HepG2 (cell line): ENCODE measurements at regions of chr3 and their contacts with region 1.

Region 1: DNA sequence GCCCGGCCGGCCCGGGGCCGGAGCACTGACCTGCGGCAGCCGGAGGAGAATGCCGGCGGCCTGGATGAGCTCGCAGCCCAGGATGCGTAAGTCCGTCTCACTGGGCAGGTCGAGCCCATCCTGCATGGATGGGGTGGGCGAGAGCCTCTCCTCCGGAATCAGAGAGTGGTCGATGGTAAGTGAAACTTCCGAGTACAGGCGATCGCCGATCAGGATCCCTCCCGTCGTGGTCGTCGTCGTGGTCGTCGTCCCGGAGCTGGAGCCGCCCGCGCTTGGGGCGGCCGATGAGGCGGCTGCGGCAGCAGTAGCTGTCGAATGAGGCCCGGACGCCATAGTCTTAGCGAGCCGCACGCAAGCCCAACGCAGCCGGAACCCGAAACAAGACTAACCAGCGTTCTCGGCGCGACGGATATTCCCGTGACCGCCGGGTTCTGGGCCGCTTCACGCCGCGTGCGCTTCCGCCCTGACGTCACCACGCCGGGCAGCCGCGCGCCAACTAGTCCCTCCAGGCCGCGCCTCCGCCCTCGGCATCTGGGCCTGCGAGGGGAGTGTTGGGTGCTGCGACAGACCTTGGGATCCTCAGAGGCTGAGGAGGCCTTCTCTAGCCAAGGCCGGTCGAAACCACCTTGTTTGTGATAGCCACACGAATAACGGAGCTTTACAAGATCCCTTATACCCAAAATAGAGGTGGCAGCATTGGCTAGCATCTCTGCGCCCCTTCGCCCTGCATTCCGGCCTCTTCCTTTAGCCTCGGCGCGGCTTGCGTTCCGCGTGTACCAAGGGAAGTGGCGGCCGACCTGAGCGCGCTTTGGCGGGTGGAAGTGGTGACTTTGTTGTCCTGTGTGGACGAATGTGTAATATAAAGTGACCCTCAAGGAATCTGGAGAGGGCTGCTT is at the start of gene CCNL1:
- DNase-seq: peak; percentile 88
- ATAC-seq: peak; percentile 87
- H3K4me3 ChIP-seq: peak within 1 kb of the TSS; percentile 94 to 99 (median 98)
- H3K27ac ChIP-seq: peak within 1 kb of the TSS; percentile 100
- H3K4me1 ChIP-seq: peaks cover 64% of the 10 kb centered on the region
- H3K27me3 ChIP-seq: no peaks in the 10 kb centered on the region
- CTCF ChIP-seq: 0 out of 2 replicates have a peak, but pooled peaks have one; percentile 15
- EP300 ChIP-seq: peak; percentile 58 to 70; a peak in 3 of 4 replicates
- POLR2A ChIP-seq: peak; percentile 97 to 99
- RAD21 ChIP-seq: peak; percentile 64
- total RNA-seq, gene CCNL1: 23.5 and 151 TPM in 2 replicates

Region 2: GRCh38 chr3:156554842-156555687 is 604.9 kb before region 1 on chr3 and contains the start of gene SSR3:
- CTCF ChIA-PET with region 1: no interaction called
- POLR2A ChIA-PET with region 1: interaction called, 12 read pairs
- in situ Hi-C with region 1: no loop called
- intact Hi-C with region 1: no loop called
- DNase-seq: peak; percentile 96
- ATAC-seq: peak; percentile 99
- H3K4me3 ChIP-seq: peak within 1 kb of the TSS; percentile 85 to 100 (median 91)
- H3K27ac ChIP-seq: peak within 1 kb of the TSS; percentile 94
- H3K4me1 ChIP-seq: peaks cover 38% of the 10 kb centered on the region
- H3K27me3 ChIP-seq: no peaks in the 10 kb centered on the region; a peak in 2 of 5 replicates
- CTCF ChIP-seq: no peak
- EP300 ChIP-seq: peak in 1 of 2 experiments; percentile 35; a peak in 2 of 4 replicates
- POLR2A ChIP-seq: peak; percentile 88 to 98
- RAD21 ChIP-seq: no peak; the same call in 1 of the 2 replicates
- total RNA-seq, gene SSR3: 268 and 325 TPM in 2 replicates

Region 3: DNA sequence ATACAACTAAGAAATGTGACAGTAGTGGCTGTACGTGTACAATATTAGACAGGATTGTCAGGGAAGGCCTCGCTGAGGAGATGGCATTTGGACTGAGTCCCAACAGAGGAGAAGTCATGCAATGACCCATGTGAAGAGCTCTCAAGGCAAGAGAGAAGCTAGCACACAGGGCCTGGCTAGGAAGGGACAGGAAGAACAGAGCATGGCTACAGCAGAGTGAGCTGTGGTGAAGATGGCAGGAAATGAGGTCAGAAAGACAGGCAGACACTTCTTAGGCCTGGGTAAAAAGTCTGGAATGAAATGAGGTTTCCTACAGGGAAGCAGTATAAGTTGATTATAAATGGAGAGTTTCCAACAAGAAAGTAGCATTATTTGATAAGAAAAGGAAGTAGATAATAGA is 367.1 kb before region 1 on chr3:
- CTCF ChIA-PET with region 1: no interaction called
- POLR2A ChIA-PET with region 1: no interaction called
- in situ Hi-C with region 1: no loop called
- intact Hi-C with region 1: no loop called
- DNase-seq: no peak
- ATAC-seq: no peak
- H3K4me3 ChIP-seq: no peak overlapping the region
- H3K27ac ChIP-seq: no peak overlapping the region
- H3K4me1 ChIP-seq: peaks cover 51% of the 10 kb centered on the region
- H3K27me3 ChIP-seq: no peaks in the 10 kb centered on the region; a peak in 1 of 5 replicates
- CTCF ChIP-seq: no peak
- EP300 ChIP-seq: no peak
- POLR2A ChIP-seq: no peak
- RAD21 ChIP-seq: no peak

Region 4: GRCh38 chr3:157122116-157122515 is 37.9 kb before region 1 on chr3:
- CTCF ChIA-PET with region 1: no interaction called
- POLR2A ChIA-PET with region 1: interaction called, 22 read pairs
- in situ Hi-C with region 1: no loop called
- intact Hi-C with region 1: no loop called
- DNase-seq: peak; percentile 43
- ATAC-seq: no peak
- H3K4me3 ChIP-seq: no peak overlapping the region
- H3K27ac ChIP-seq: peak overlapping the region; percentile 23
- H3K4me1 ChIP-seq: peaks cover 86% of the 10 kb centered on the region
- H3K27me3 ChIP-seq: no peaks in the 10 kb centered on the region
- CTCF ChIP-seq: no peak
- EP300 ChIP-seq: peak in 1 of 2 experiments; percentile 40; a peak in 1 of 4 replicates
- POLR2A ChIP-seq: no peak
- RAD21 ChIP-seq: no peak

Region 5: GRCh38 chr3:157174649-157175498 is 14.9 kb after region 1 on chr3:
- CTCF ChIA-PET with region 1: no interaction called
- POLR2A ChIA-PET with region 1: interaction called, 484 read pairs
- in situ Hi-C with region 1: no loop called
- intact Hi-C with region 1: loop called (anchors 1 kb)
- DNase-seq: peak; percentile 98
- ATAC-seq: peak; percentile 95
- H3K4me3 ChIP-seq: peak overlapping the region; percentile 74 to 88 (median 74)
- H3K27ac ChIP-seq: peak overlapping the region; percentile 88
- H3K4me1 ChIP-seq: peaks cover 35% of the 10 kb centered on the region
- H3K27me3 ChIP-seq: no peaks in the 10 kb centered on the region; a peak in 1 of 5 replicates
- CTCF ChIP-seq: no peak; the same call in 1 of the 2 replicates
- EP300 ChIP-seq: peak; percentile 24 to 56; a peak in 3 of 4 replicates
- POLR2A ChIP-seq: peak; percentile 92 to 93
- RAD21 ChIP-seq: peak; percentile 37; the same call in 1 of the 2 replicates

Region 6: GRCh38 chr3:157239082-157239704 is 79.2 kb after region 1 on chr3:
- CTCF ChIA-PET with region 1: interaction called, 3 read pairs
- POLR2A ChIA-PET with region 1: no interaction called
- in situ Hi-C with region 1: loop called (anchors 5 kb)
- intact Hi-C with region 1: loop called (anchors 1 kb)
- DNase-seq: peak; percentile 38
- ATAC-seq: peak; percentile 100
- H3K4me3 ChIP-seq: no peak overlapping the region
- H3K27ac ChIP-seq: no peak overlapping the region
- H3K4me1 ChIP-seq: no peaks in the 10 kb centered on the region
- H3K27me3 ChIP-seq: no peaks in the 10 kb centered on the region; a peak in 1 of 5 replicates
- CTCF ChIP-seq: peak; percentile 93
- EP300 ChIP-seq: no peak
- POLR2A ChIP-seq: no peak
- RAD21 ChIP-seq: peak; percentile 72